Dendritic cell treated with granulocyte-macrophage colony-stimulating factor and Interleukin-4, amounts not matched to agents 40 ng/mL and 50 ng/mL, for 4 days (primary cell): ENCODE measurements at regions of chr9 and their contacts with region 1.

Region 1: DNA sequence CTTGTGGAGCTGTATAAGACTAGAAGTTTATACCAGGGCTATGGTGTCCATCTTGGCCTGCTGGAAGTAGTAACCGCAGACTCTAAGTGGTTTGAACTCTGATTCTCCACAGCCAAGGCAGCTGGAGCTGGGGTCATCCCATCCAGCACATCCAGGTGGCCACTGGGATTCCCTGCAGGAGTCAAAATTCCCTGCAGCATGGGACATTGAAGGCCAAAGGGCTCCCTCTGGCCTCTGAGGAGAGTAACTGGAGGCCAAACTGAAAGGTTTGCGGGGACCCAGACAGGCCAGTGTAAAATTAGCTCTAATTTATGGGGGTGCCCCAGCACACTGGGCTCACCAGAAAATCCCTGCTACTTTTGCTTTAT is 12.2 kb upstream of the PRXL2C start:
- H3K4me3 Mint-ChIP-seq: no peak overlapping the region
- H3K27ac Mint-ChIP-seq: no peak overlapping the region
- H3K4me1 Mint-ChIP-seq: no peaks in the 10 kb centered on the region
- H3K27me3 Mint-ChIP-seq: peaks cover 1% of the 10 kb centered on the region

Region 2: DNA sequence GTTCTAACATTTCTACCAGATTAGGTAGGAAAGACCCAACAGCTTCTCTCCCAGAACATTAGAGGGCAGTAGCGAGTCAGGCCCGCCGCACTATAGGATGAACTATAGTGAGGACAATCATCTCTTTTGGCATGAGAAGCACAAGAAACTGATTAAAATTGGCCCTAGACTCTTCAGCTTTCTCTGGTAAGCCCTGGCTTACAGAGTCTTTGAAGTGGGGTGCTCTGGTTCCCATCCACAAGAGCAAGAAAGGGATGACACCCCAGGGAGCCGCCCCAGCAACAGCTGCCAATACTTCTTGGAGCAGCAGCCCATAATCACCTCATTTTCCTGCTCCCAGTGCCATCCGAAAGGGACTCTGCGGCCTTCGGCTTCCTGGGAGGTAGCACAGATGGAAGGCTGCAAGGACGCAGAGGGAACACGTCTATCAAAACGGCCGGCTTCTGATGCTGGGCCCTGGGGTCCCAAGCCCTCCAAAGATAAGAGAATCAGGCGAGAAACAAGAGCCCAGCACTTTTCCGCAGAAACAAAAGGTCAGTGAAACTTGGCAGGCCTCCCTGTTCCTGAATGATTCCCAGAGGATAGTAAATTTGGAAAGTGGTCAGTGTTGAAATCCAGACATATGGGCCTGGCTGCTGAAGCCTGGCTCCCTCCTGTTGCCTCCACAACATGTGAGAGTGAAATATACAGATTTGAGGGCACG is 434.7 kb before region 1 on chr9:
- intact Hi-C with region 1: loop called (anchors 5 kb)
- H3K4me3 Mint-ChIP-seq: no peak overlapping the region
- H3K27ac Mint-ChIP-seq: no peak overlapping the region
- H3K4me1 Mint-ChIP-seq: no peaks in the 10 kb centered on the region
- H3K27me3 Mint-ChIP-seq: peaks cover 21% of the 10 kb centered on the region

Region 3: GRCh38 chr9:96327694-96328352 is 339.5 kb before region 1 on chr9:
- intact Hi-C with region 1: loop called (anchors 5 kb)
- H3K4me3 Mint-ChIP-seq: no peak overlapping the region
- H3K27ac Mint-ChIP-seq: no peak overlapping the region
- H3K4me1 Mint-ChIP-seq: no peaks in the 10 kb centered on the region
- H3K27me3 Mint-ChIP-seq: no peaks in the 10 kb centered on the region

Region 4: DNA sequence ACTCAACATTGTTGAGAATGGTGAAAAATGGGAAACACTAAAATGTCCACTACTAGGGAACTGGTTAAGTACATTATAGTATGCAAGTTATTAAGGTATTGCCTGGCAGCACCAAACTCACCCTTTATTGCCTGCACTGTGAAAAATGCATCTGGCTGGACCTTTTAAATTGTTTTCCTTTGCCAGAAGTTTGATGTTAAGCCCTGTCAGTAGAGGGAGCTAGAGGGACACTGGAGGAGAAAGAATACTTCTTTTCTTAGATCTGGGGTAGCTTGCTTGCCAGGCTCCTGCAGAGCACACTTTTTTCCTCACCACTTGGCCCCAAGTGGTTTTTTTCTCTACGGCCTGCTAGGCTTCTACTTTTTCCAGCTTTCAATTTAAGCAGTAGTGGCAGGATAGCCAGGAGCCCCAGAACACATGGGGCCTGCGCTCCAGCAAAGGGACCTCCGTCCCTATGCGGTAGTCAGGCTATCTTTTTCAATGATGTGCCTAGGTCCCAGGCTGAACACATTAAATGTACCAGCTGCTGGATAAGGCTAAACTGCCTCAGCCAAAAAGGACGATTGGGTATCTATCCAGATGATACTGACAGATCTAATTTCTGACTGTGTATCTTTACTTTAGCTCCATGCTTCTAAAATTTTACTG is 225.4 kb before region 1 on chr9:
- intact Hi-C with region 1: loop called (anchors 5 kb)
- H3K4me3 Mint-ChIP-seq: no peak overlapping the region
- H3K27ac Mint-ChIP-seq: no peak overlapping the region
- H3K4me1 Mint-ChIP-seq: no peaks in the 10 kb centered on the region
- H3K27me3 Mint-ChIP-seq: peaks cover under 1% of the 10 kb centered on the region

Region 5: DNA sequence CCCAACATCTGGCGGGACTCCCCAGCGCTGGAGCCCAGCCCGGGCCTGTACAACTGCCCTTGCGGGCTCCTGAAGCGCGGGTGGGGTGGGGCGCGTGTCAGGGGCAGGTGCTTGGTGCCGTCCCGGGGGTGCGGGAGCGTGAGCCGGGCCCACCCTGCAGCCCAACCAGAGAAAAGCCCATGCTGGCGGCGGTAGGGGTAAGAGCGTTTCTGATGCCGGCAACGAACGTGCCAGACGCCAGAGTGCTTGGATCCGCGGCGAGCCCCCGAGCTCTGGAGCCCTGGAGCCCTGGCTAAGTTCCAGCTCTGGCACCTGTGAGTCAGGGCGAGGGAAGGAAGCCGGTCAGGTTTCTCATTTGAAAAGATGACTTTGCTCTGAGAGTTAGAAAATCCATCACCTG is 52.6 kb after region 1 on chr9:
- intact Hi-C with region 1: no loop called
- H3K4me3 Mint-ChIP-seq: no peak overlapping the region
- H3K27ac Mint-ChIP-seq: no peak overlapping the region
- H3K4me1 Mint-ChIP-seq: peaks cover 6% of the 10 kb centered on the region
- H3K27me3 Mint-ChIP-seq: peaks cover 34% of the 10 kb centered on the region